Activated CD8-positive, alpha-beta T cell treated with anti-CD3 and anti-CD28 coated beads for 36 hours (primary cell): ENCODE measurements at regions of chrX and their contacts with region 1.

Region 1: GRCh38 chrX:19799319-19800182 is 87.8 kb downstream of the SH3KBP1 start:
- DNase-seq: peak; percentile 70
- ATAC-seq: peak; percentile 78
- H3K4me3 Mint-ChIP-seq: peak overlapping the region; percentile 92
- H3K27ac Mint-ChIP-seq: peak overlapping the region; percentile 93
- H3K4me1 Mint-ChIP-seq: peaks cover 62% of the 10 kb centered on the region
- H3K27me3 Mint-ChIP-seq: no peaks in the 10 kb centered on the region
- CTCF ChIP-seq: no peak

Region 2: DNA sequence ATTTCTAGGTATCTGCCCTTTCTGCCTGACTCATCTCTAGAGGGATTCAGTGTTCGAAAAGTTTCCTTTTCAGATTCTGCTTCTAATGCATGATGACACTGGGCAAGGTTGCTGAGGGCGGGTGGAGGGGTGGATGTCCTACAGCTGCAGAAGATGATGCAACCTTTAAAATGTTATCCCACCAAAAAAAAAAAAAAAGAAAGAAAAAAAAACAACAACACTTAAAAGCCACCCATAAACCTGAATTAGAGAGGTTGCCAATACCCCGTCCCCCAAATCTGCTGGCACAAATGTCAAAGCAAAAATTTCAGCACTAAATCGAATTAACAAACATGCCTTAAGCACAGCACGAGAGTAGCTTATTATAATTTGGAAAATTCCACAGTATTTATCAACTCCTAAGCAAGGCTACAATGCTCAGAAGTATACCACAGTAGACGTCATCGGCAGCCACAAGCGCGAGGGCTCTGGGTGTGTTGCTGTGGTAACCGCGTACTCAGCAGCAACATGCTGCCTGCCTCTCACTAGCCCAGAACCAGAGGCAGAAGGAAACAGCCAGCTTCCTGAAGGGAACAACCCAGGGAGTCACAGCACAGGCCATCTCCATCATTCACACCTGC is 116.7 kb before region 1 on chrX:
- CTCF ChIA-PET with region 1: no interaction called
- POLR2A ChIA-PET with region 1: interaction called, 3 read pairs
- intact Hi-C with region 1: loop called (anchors 10 kb)
- DNase-seq: peak; percentile 91
- ATAC-seq: peak; percentile 76
- H3K4me3 Mint-ChIP-seq: peak overlapping the region; percentile 71
- H3K27ac Mint-ChIP-seq: peak overlapping the region; percentile 94
- H3K4me1 Mint-ChIP-seq: peaks cover 85% of the 10 kb centered on the region
- H3K27me3 Mint-ChIP-seq: no peaks in the 10 kb centered on the region
- CTCF ChIP-seq: no peak

Region 3: GRCh38 chrX:19698125-19698524 is 101.4 kb before region 1 on chrX:
- CTCF ChIA-PET with region 1: no interaction called
- POLR2A ChIA-PET with region 1: no interaction called
- intact Hi-C with region 1: no loop called
- DNase-seq: no peak
- ATAC-seq: no peak
- H3K4me3 Mint-ChIP-seq: no peak overlapping the region
- H3K27ac Mint-ChIP-seq: no peak overlapping the region
- H3K4me1 Mint-ChIP-seq: peaks cover 57% of the 10 kb centered on the region
- H3K27me3 Mint-ChIP-seq: no peaks in the 10 kb centered on the region
- CTCF ChIP-seq: no peak

Region 4: DNA sequence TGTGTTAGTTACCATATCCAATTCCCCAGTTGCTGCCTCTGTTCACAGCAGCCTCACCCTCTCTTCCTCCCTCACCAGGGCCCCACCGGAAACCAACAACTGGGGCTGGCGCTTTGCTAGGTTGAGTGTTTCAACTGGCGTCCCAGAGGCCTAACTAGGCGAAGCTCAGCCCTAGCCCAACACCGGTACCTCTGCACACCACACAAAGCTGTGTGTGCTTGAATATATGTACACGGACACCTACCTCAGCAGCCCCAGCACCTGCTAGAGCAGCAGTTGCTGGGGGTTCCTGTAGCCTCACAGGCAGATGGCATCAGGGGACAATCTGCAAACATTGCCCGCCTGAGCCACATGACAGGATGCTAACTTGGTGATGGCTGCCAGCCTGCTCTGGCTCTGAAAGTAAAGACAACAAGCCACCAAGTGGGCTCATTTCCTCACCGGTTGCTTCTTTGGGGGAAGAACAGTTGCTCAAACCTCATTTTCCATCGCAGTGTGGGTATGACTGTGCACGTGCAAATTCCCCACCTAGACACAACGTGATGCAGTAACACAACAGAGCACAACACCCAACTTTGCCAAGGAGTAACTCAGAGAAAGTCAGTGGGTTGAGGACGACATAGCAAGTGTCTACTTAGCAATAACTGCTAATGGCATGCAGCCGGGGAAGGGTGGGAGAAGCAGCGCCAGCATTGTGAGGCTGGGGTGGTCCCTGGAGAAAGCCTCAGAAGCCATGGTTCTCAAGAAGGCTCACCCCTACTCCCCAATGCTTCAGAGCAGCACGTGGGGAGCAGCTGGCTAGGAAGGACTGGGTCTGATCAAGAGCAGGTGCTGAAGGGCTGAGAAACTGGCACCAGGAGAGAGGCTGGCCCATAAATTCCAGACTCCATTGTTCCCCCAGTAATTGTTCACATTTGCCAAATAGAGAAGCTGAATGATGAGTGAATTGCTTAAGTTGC is 51.6 kb before region 1 on chrX:
- CTCF ChIA-PET with region 1: no interaction called
- POLR2A ChIA-PET with region 1: interaction called, 5 read pairs
- intact Hi-C with region 1: loop called (anchors 5 kb)
- DNase-seq: peak; percentile 85
- ATAC-seq: peak; percentile 73
- H3K4me3 Mint-ChIP-seq: peak overlapping the region; percentile 63
- H3K27ac Mint-ChIP-seq: peak overlapping the region; percentile 98
- H3K4me1 Mint-ChIP-seq: peaks cover 94% of the 10 kb centered on the region
- H3K27me3 Mint-ChIP-seq: no peaks in the 10 kb centered on the region
- CTCF ChIP-seq: no peak

Region 5: GRCh38 chrX:19840899-19841648 is 41.5 kb after region 1 on chrX:
- CTCF ChIA-PET with region 1: interaction called, 3 read pairs
- POLR2A ChIA-PET with region 1: interaction called, 3 read pairs
- intact Hi-C with region 1: loop called (anchors 5 kb)
- DNase-seq: peak; percentile 37
- ATAC-seq: peak; percentile 38
- H3K4me3 Mint-ChIP-seq: peak overlapping the region; percentile 47
- H3K27ac Mint-ChIP-seq: peak overlapping the region; percentile 90
- H3K4me1 Mint-ChIP-seq: peaks cover 70% of the 10 kb centered on the region
- H3K27me3 Mint-ChIP-seq: no peaks in the 10 kb centered on the region
- CTCF ChIP-seq: no peak

Region 6: GRCh38 chrX:19887911-19888879 is 88.6 kb after region 1 on chrX:
- CTCF ChIA-PET with region 1: no interaction called
- POLR2A ChIA-PET with region 1: interaction called, 4 read pairs
- intact Hi-C with region 1: loop called (anchors 10 kb)
- DNase-seq: peak; percentile 51
- ATAC-seq: peak; percentile 41
- H3K4me3 Mint-ChIP-seq: peak overlapping the region; percentile 71
- H3K27ac Mint-ChIP-seq: peak overlapping the region; percentile 83
- H3K4me1 Mint-ChIP-seq: peaks cover 40% of the 10 kb centered on the region
- H3K27me3 Mint-ChIP-seq: no peaks in the 10 kb centered on the region
- CTCF ChIP-seq: no peak